ENCODE measurements at regions of chr10 and their contacts with region 1.

Region 1: DNA sequence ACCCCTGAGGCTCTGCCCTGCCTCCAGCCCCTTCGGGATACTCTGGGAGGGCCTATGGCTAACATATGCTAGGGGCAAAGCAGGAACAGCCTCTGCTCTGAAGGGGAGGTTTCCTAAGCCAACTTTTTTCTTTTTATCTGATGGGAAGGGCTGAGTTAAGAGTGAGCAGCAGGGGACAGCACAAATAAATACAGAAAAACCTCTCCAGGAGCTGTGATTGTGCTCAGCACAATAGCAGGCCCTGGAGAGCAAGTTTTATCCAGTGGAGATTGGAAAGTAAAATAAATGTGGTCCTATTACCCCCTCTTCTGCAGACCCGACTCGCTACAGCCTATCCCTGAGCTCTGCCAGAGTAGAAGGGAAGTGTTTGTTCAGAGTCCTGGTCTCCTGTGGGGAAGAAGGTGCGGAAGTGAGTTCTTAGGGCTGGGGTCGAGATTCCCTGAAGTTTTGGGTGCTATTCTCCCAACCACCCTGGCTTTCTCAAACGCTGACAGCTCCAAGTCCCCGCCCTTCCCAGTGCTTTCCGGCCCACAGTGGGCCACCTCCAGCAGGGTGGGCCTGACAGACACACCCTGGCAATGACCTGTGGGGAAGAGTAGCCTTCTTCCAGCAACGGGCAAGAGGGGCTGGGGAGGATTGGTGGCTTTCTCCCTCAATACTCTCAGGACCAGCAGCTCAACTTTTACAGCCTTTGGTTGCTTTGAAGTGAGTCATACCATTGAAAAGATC is 23.0 kb upstream of the AFAP1L2 start:
- DNase-seq: no peak
- ATAC-seq: peak; percentile 76
- H3K4me3 ChIP-seq: no peak overlapping the region
- H3K27ac ChIP-seq: peak overlapping the region; percentile 80
- H3K4me1 ChIP-seq: peaks cover 36% of the 10 kb centered on the region
- H3K27me3 ChIP-seq: no peaks in the 10 kb centered on the region
- CTCF ChIP-seq: peak; percentile 41

Region 2: DNA sequence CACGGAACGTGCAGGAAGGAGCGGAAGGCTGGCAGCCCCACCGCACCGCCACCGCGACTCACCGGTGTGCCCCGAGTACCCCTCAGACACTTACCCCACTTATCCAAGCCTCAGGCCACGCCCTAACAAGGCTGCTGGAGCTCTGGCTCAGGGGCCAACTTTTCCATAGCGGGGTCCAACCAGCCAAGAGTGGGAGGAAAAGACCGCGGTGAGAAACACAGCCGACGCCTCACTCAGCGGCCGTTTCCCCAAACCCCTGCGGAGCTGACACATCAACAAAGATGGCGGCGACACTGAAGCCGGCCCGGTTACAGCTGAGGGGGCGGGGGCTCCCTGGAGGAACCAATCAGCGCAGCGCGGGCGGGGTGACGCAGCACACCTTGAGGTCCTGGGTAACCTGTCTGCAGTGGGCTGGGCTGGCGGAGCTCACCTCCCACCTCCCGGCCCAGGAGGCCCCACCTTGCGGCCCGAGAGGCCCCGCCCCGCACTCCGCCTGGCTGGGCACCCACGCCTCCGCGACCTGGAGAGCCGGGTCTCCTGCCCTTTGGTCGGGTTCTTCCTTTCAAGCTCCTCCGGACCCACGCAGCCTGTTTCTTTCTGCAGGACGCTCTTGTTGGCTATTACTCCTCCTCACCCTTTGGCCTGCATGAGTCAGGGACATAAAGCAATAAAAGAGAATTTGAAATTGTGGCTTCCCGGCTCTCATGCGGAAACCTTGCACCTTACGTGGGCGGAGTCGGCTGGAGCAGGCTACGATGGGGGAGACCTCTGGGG is 253.2 kb before region 1 on chr10 and contains the start of gene CCDC186:
- CTCF ChIA-PET with region 1: no interaction called
- POLR2A ChIA-PET with region 1: no interaction called
- in situ Hi-C with region 1: no loop called
- intact Hi-C with region 1: loop called (anchors 10 kb)
- DNase-seq: peak; percentile 78
- ATAC-seq: peak; percentile 100
- H3K4me3 ChIP-seq: peak within 1 kb of the TSS; percentile 91 to 95
- H3K27ac ChIP-seq: peak within 1 kb of the TSS; percentile 87
- H3K4me1 ChIP-seq: peaks cover 16% of the 10 kb centered on the region
- H3K27me3 ChIP-seq: no peaks in the 10 kb centered on the region; the same call in 1 of the 2 replicates
- CTCF ChIP-seq: no peak
- total RNA-seq, gene CCDC186: 14.4 TPM